ENCODE measurements at regions of chr9 and their contacts with region 1.

Region 1: DNA sequence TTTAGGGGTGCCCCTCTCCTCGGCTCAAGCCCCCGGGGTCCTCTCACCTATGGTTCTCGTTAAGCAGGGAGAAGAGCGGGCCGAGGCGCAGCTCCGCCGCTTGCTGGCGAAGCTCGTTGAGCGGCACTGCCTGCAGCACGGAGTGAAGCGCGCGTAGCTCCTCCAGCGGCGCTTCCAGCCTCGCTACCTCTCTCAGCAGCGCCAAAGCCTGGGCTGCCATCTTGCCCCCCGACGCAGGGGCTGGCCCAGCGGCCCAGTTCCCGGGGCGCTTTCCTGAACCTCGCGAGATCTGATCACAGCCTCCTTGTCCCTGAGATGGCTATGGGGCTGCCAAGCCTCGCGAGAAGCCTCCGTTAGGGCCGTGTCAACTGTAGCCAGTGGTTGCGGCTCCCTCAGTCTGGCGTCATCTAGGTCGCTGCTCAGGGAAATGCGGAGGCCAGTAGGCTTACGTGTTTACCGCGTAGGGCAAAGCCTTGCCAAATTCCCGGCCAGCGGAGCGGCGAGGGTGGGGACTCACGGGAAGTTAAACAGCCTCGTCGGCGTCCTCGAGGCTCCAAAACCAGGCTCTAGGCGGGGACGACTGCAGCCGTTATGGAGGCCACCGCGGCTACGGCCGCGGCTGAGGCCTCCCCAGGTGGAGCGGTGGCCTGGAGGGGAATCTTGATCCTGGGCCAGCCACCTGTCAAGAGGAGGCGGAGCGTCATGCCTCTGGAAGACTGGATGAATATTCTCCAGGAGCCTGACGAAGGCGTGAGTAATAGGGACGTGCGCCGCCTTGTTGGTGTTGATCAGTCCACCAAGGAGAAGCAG is at the start of gene PSMD5:
- DNase-seq: peak; percentile 100
- H3K4me3 Mint-ChIP-seq: peak within 1 kb of the TSS; percentile 95
- H3K27ac Mint-ChIP-seq: peak within 1 kb of the TSS; percentile 95
- H3K4me1 Mint-ChIP-seq: peaks cover 81% of the 10 kb centered on the region
- H3K27me3 Mint-ChIP-seq: no peaks in the 10 kb centered on the region
- total RNA-seq, gene PSMD5: 62.1 to 63.5 TPM

Region 2: DNA sequence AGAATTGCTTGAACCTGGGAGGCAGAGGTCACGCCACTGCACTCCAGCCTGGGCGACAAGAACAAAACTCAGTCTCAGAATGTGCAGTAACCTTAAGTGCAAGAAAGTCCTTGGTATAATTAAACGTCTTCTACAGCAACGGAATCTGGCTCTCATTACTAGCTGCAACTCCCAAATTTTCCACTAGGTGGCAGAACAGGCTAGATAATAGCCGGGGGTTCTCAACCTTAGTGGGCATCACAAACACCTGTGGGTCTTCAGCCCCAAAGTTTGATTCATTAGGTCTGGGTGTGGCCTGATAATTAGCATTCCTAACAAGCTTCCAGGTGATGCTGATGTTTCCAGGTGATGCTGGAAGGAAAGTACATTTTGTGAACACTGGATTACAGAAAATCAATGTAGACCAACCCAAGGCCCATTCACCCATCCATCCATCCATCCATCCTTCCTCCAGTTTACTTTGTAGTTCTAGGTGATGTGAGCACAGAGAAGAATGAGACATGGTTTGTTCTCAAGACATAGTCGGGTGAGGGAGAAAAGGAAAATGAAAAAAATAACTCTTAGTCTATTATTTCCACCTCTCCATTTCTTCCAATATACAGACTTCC is 87.0 kb before region 1 on chr9:
- CTCF ChIA-PET with region 1: interaction called, 11 read pairs
- intact Hi-C with region 1: loop called (anchors 1 kb)
- DNase-seq: peak; percentile 83
- H3K4me3 Mint-ChIP-seq: no peak overlapping the region
- H3K27ac Mint-ChIP-seq: peak overlapping the region; percentile 58
- H3K4me1 Mint-ChIP-seq: peaks cover 34% of the 10 kb centered on the region
- H3K27me3 Mint-ChIP-seq: no peaks in the 10 kb centered on the region

Region 3: GRCh38 chr9:120868676-120869359 is 25.9 kb after region 1 on chr9:
- CTCF ChIA-PET with region 1: interaction called, 7 read pairs
- intact Hi-C with region 1: loop called (anchors 1 kb)
- DNase-seq: peak; percentile 97
- H3K4me3 Mint-ChIP-seq: peak overlapping the region; percentile 74
- H3K27ac Mint-ChIP-seq: peak overlapping the region; percentile 87
- H3K4me1 Mint-ChIP-seq: peaks cover 49% of the 10 kb centered on the region
- H3K27me3 Mint-ChIP-seq: no peaks in the 10 kb centered on the region

Region 4: GRCh38 chr9:120904061-120904977 is 61.4 kb after region 1 on chr9:
- CTCF ChIA-PET with region 1: no interaction called
- intact Hi-C with region 1: loop called (anchors 1 kb)
- DNase-seq: peak; percentile 83
- H3K4me3 Mint-ChIP-seq: no peak overlapping the region
- H3K27ac Mint-ChIP-seq: peak overlapping the region; percentile 94
- H3K4me1 Mint-ChIP-seq: peaks cover 88% of the 10 kb centered on the region
- H3K27me3 Mint-ChIP-seq: no peaks in the 10 kb centered on the region

Region 5: GRCh38 chr9:120936011-120936763 is 93.3 kb after region 1 on chr9:
- CTCF ChIA-PET with region 1: interaction called, 3 read pairs
- intact Hi-C with region 1: loop called (anchors 1 kb)
- DNase-seq: peak; percentile 97
- H3K4me3 Mint-ChIP-seq: peak overlapping the region; percentile 49
- H3K27ac Mint-ChIP-seq: peak overlapping the region; percentile 99
- H3K4me1 Mint-ChIP-seq: peaks cover 61% of the 10 kb centered on the region
- H3K27me3 Mint-ChIP-seq: no peaks in the 10 kb centered on the region

Region 6: GRCh38 chr9:121201738-121202533 is 359.0 kb after region 1 on chr9 and contains the start of gene RAB14:
- CTCF ChIA-PET with region 1: no interaction called
- intact Hi-C with region 1: loop called (anchors 2 kb)
- DNase-seq: peak; percentile 100
- H3K4me3 Mint-ChIP-seq: peak within 1 kb of the TSS; percentile 91
- H3K27ac Mint-ChIP-seq: peak within 1 kb of the TSS; percentile 95
- H3K4me1 Mint-ChIP-seq: peaks cover 42% of the 10 kb centered on the region
- H3K27me3 Mint-ChIP-seq: no peaks in the 10 kb centered on the region
- total RNA-seq, gene RAB14: 61.1 to 64.2 TPM

Measured in activated naive CD4-positive, alpha-beta T cell treated with anti-CD3 and anti-CD28 coated beads for 36 hours (primary cell).